ENCODE measurements at regions of chr11 and their contacts with region 1.

Region 1: GRCh38 chr11:62233730-62234129 is 8.3 kb upstream of the SCGB1D2 start:
- DNase-seq: no peak
- ATAC-seq: no peak; the same call in 1 of the 2 replicates
- H3K4me3 ChIP-seq: no peak overlapping the region
- H3K27ac ChIP-seq: no peak overlapping the region
- H3K4me1 ChIP-seq: no peaks in the 10 kb centered on the region
- H3K27me3 ChIP-seq: peaks cover 34% of the 10 kb centered on the region; the same call in 1 of the 2 replicates
- CTCF ChIP-seq: peak; percentile 12 to 48 (median 31); a peak in 3 of 6 replicates
- POLR2A ChIP-seq: no peak
- RAD21 ChIP-seq: peak; percentile 49

Region 2: DNA sequence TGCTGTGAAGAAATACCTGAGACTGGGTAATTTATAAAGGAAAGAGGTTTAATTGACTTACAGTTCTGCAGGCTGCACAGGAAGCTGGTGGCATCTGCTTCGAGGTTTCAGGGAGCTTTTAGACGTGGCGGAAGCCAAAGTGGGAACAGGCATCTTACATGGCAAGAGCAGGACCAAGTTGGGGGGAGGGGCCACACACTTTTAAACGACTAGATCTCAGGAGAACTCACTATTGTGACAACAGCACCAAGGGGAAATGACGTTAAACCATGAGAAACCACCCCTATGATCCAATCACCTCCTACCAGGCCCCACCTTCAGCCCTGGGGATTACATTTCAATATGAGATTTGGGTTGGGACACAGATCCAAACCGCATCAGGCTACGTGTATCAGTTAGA is 76.3 kb after region 1 on chr11:
- CTCF ChIA-PET with region 1: no interaction called
- POLR2A ChIA-PET with region 1: no interaction called
- RAD21 ChIA-PET with region 1: interaction called in 1 of 2 experiments, 3 read pairs
- intact Hi-C with region 1: loop called (anchors 5 kb)
- DNase-seq: no peak
- ATAC-seq: no peak
- H3K4me3 ChIP-seq: no peak overlapping the region
- H3K27ac ChIP-seq: no peak overlapping the region
- H3K4me1 ChIP-seq: no peaks in the 10 kb centered on the region
- H3K27me3 ChIP-seq: peaks cover 3% of the 10 kb centered on the region; the same call in 1 of the 2 replicates
- CTCF ChIP-seq: no peak
- POLR2A ChIP-seq: no peak
- RAD21 ChIP-seq: no peak

Region 3: DNA sequence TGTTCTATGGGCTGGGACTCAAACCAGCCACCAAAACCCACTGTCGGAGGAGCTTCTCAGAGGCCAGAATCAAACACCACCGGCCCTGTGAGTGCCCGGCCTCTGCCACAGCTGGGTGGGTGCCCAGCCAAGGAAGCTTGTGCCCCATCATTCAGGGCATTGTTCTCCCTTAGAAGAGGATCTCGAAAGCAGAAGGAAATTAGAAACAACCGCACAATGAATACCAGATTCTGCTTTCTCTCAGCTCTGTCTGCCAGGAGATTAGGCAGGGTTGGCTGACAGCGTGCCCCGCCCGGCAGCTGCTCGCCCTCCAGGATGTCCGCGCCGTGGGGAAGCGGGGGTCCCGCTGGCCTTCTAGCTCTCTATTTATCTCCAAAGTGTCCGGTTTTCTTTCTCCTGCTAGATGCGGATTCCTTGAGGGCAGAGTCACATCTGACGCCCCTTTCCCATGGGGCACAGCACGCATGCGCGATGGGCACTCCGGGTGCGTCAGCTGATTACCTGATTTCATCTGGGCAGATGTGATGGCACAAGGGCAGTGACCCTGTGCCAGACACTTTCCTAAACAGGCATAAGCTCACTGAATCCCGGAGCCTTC is 210.6 kb after region 1 on chr11:
- CTCF ChIA-PET with region 1: no interaction called
- POLR2A ChIA-PET with region 1: no interaction called
- RAD21 ChIA-PET with region 1: no interaction called
- intact Hi-C with region 1: no loop called
- DNase-seq: no peak
- ATAC-seq: no peak
- H3K4me3 ChIP-seq: no peak overlapping the region
- H3K27ac ChIP-seq: no peak overlapping the region
- H3K4me1 ChIP-seq: peaks cover 8 to 11% of the 10 kb centered on the region in 2 experiments; a peak in 3 of 4 replicates
- H3K27me3 ChIP-seq: peaks cover 5% of the 10 kb centered on the region; the same call in 1 of the 2 replicates
- CTCF ChIP-seq: no peak
- POLR2A ChIP-seq: no peak
- RAD21 ChIP-seq: no peak

Measured in HCT116 (cell line).